OCI-LY7 (cell line): ENCODE measurements at regions of chr3 and their contacts with region 1.

Region 1: GRCh38 chr3:420584-420983 is 224.0 kb downstream of the CHL1 start:
- DNase-seq: no peak
- H3K4me3 ChIP-seq: no peak overlapping the region
- H3K27ac ChIP-seq: no peak overlapping the region
- H3K4me1 ChIP-seq: no peaks in the 10 kb centered on the region
- CTCF ChIP-seq: no peak

Region 2: GRCh38 chr3:399647-400046 is 20.9 kb before region 1 on chr3:
- CTCF ChIA-PET with region 1: no interaction called
- POLR2A ChIA-PET with region 1: no interaction called
- intact Hi-C with region 1: no loop called
- DNase-seq: no peak
- H3K4me3 ChIP-seq: no peak overlapping the region
- H3K27ac ChIP-seq: no peak overlapping the region
- H3K4me1 ChIP-seq: no peaks in the 10 kb centered on the region
- CTCF ChIP-seq: no peak

Region 3: DNA sequence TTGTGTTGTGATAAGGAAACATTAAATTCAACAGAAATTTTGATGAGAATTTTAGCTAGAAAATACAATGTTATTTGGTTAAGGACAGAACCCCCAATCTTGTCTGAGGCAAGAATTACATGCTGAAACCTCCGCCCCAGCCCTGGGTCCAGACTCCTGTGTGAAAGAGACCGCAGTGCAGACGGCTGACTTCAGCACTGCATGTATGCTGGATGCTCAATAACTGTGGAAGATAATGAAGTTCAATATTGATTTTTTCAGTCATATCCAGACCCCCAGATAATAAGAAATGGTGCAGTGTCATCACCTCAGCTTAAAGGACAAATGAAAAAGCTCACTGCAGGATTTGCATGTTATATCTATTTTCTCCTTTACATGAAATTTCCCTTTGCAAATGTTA is 1489.7 kb after region 1 on chr3:
- CTCF ChIA-PET with region 1: no interaction called
- POLR2A ChIA-PET with region 1: no interaction called
- intact Hi-C with region 1: loop called (anchors 10 kb)
- DNase-seq: no peak
- H3K4me3 ChIP-seq: no peak overlapping the region
- H3K27ac ChIP-seq: no peak overlapping the region
- H3K4me1 ChIP-seq: no peaks in the 10 kb centered on the region
- CTCF ChIP-seq: no peak